ENCODE measurements at regions of chr6 and their contacts with region 1.

Region 1: GRCh38 chr6:44338228-44339122 is 4.0 kb upstream of the SPATS1 start:
- DNase-seq: no peak

Region 2: GRCh38 chr6:44096612-44097011 is 241.9 kb before region 1 on chr6:
- intact Hi-C with region 1: loop called (anchors 10 kb)
- DNase-seq: peak; percentile 90

Region 3: GRCh38 chr6:44172731-44173500 is 165.6 kb before region 1 on chr6:
- intact Hi-C with region 1: loop called in 1 of 2 experiments (anchors 10 kb)
- DNase-seq: peak; percentile 95

Region 4: DNA sequence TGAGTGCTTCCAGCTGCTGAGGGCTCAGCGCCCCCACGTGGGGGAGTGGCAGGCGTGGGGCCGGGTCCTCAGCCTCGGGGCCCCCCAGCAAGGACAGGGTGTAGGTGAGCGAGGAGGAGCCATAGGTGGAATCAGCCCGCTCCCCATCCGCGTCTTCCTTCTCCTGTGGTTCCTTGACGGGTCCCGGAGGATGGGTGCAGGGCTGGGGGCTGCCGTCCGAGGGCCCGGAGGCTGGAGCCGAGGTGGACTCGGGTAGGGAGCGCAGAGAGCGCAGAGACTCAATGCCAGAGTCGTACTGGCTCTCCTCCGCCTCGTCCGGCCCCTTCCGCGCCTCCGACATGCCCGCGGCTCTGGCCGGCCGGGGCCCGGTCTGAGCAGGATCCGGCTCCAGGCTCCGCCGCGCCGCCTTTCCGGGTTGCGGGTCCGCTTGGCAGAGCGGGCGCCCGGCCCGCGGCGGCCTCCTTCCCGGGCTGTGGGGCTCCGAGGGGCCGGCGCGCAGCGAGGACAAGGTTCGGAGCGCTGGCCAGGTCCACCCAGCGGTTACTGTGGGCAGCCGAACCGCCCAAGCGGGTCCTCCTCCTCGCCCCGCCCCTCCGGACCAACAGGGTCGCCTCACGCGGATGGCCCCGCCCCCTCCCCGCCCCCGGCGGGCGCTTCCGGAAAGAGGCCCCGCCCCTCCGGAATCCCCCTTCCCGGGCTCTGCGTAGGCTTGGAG is 73.3 kb before region 1 on chr6 and contains the start of gene NFKBIE:
- intact Hi-C with region 1: loop called in 1 of 2 experiments (anchors 5 kb)
- DNase-seq: peak; percentile 98
- total RNA-seq, gene NFKBIE: 4.5 to 6.7 TPM

Region 5: GRCh38 chr6:45226081-45226480 is 887.6 kb after region 1 on chr6:
- intact Hi-C with region 1: no loop called
- DNase-seq: no peak

Measured in posterior vena cava (tissue), 2 donors.